Heart left ventricle (tissue), 16 donors: ENCODE measurements at regions of chr11 and their contacts with region 1.

Region 1: GRCh38 chr11:45964911-45965389 is 42.5 kb downstream of the LARGE2 start:
- DNase-seq: peak in 4 of 5 donors; percentile 35 to 63 (median 52)
- ATAC-seq: peak; percentile 68 to 93 (median 88)
- H3K4me3 ChIP-seq: no peak overlapping the region
- H3K27ac ChIP-seq: peak overlapping the region in 2 of 12 donors; percentile 13
- H3K4me1 ChIP-seq: peaks cover 0 to 18% (median 4%) of the 10 kb centered on the region in 12 donors
- H3K27me3 ChIP-seq: no peaks in the 10 kb centered on the region
- CTCF ChIP-seq: peak; percentile 86 to 97 (median 89)
- POLR2A ChIP-seq: no peak

Region 2: DNA sequence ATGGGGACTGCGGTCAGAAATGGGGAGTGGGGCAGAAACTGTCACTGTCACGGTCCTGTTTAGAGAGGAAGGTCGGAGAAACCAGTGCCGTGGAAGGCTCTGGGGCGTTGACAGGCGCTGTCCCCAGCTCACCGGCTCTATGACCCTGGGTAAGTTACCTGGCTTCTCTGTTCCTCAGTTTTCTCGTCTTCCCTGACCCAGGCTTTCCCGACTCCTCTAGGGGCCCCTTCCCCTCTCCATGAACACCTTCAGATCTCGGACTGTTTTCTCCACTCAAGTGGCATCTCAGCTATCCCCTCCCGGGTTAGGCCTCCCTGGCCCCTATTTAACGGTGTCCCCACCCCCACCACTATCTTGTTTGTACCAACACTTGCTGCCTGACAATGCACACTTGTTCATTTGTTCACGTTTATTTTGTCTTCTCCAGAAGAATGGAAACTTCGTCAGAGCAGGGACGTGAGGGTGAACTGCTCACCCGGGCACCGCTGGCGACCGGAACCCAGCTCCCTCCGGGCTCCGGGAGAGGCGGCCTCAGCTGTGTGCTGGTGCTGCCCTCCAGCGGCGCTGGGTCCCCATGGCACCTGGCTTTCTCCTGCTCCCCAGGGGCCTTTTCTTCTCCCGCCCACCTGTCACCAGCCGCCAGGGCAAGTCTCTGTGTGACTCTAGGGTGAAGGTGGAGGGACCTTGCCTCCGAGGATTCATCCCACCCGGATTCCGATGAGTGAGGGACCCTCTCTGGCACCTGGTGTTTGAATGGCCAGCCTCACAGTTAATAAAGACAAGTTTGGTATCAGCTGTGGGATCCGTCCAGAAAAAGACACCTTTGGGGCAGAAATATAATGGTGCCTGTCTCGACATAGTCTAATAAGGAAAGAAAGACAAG is 193.1 kb before region 1 on chr11:
- intact Hi-C with region 1: no loop called
- DNase-seq: peak; percentile 81 to 91 (median 88)
- ATAC-seq: peak; percentile 93 to 97 (median 96)
- H3K4me3 ChIP-seq: peak overlapping the region; percentile 18 to 65 (median 56)
- H3K27ac ChIP-seq: peak overlapping the region; percentile 45 to 84 (median 72)
- H3K4me1 ChIP-seq: peaks cover 0 to 9% (median 4%) of the 10 kb centered on the region in 12 donors
- H3K27me3 ChIP-seq: no peaks in the 10 kb centered on the region
- CTCF ChIP-seq: peak; percentile 90 to 97 (median 94)
- POLR2A ChIP-seq: peak in 1 of 2 donors; percentile 21

Region 3: GRCh38 chr11:46278387-46279125 is 313.6 kb after region 1 on chr11:
- intact Hi-C with region 1: no loop called
- DNase-seq: peak in 4 of 5 donors; percentile 56 to 73 (median 61)
- ATAC-seq: peak in 3 of 4 donors; percentile 27 to 50 (median 43)
- H3K4me3 ChIP-seq: peak overlapping the region; percentile 48 to 87 (median 72)
- H3K27ac ChIP-seq: peak overlapping the region; percentile 60 to 89 (median 80)
- H3K4me1 ChIP-seq: peaks cover 7 to 84% (median 58%) of the 10 kb centered on the region in 12 donors
- H3K27me3 ChIP-seq: peaks cover 0 to 24% (median 0%) of the 10 kb centered on the region in 9 donors
- CTCF ChIP-seq: peak; percentile 32 to 75 (median 56)
- POLR2A ChIP-seq: no peak

Region 4: DNA sequence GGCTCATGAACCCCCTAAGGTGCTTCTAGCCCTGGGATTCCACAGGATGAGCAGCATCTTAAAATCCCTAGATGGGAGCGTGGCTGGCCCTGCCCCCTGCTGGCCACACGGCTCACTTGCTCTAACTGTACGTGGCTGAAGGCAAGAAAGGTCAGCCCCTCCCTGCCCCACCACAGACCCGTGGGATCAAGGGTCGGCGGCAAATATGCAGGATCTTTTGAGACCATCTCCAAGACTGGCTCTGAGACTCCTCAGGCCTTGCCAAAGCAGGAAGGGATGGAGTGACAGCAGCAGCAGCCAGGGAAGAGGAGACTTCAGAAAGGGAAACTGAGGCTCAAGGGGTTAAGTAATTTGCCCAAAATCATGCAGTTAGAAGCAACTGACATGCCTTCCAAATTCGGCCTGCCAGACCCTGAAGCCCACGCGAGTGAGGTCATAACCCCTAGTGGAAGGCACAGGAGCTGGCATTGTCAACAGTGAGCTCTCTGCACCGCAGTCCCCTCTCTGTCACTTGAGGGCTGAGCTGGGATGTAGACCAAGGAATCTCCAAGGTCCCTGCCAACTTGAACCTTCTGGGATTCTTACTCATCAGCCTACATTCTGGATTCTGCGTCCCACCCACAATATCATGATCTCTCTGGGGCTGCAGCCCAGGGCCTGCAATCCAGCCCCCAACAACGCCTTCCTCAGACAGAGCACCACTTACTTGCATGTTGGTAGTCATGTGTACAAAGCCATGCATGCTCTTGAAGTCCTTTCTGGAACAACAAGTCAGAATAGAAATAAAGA is 343.9 kb after region 1 on chr11:
- intact Hi-C with region 1: loop called in 3 of 10 experiments (anchors 5 to 10 kb)
- DNase-seq: peak; percentile 71 to 85 (median 79)
- ATAC-seq: peak; percentile 61 to 89 (median 82)
- H3K4me3 ChIP-seq: no peak overlapping the region
- H3K27ac ChIP-seq: no peak overlapping the region
- H3K4me1 ChIP-seq: peaks cover 0 to 9% (median 0%) of the 10 kb centered on the region in 12 donors
- H3K27me3 ChIP-seq: no peaks in the 10 kb centered on the region
- CTCF ChIP-seq: peak; percentile 81 to 95 (median 88)
- POLR2A ChIP-seq: no peak

Region 5: GRCh38 chr11:46916286-46917108 is 951.5 kb after region 1 on chr11:
- intact Hi-C with region 1: no loop called
- DNase-seq: peak; percentile 61 to 75 (median 74)
- ATAC-seq: peak; percentile 66 to 84 (median 72)
- H3K4me3 ChIP-seq: peak overlapping the region; percentile 62 to 94 (median 70)
- H3K27ac ChIP-seq: peak overlapping the region; percentile 51 to 93 (median 88)
- H3K4me1 ChIP-seq: peaks cover 0 to 76% (median 47%) of the 10 kb centered on the region in 12 donors
- H3K27me3 ChIP-seq: peaks cover 0 to 50% (median 0%) of the 10 kb centered on the region in 9 donors
- CTCF ChIP-seq: peak in 4 of 12 donors; percentile 8 to 33 (median 15)
- POLR2A ChIP-seq: peak; percentile 23 to 50